PC-3 (cell line): ENCODE measurements at regions of chr4 and their contacts with region 1.

Region 1: GRCh38 chr4:73653695-73654106 is 33.5 kb upstream of the RASSF6 start:
- DNase-seq: peak; percentile 90
- ATAC-seq: peak; percentile 74
- H3K4me3 ChIP-seq: no peak overlapping the region
- H3K27ac ChIP-seq: no peak overlapping the region
- H3K4me1 ChIP-seq: no peaks in the 10 kb centered on the region
- H3K27me3 ChIP-seq: no peaks in the 10 kb centered on the region
- CTCF ChIP-seq: peak; percentile 86

Region 2: GRCh38 chr4:73308286-73308685 is 345.4 kb before region 1 on chr4:
- CTCF ChIA-PET with region 1: no interaction called
- POLR2A ChIA-PET with region 1: no interaction called
- intact Hi-C with region 1: loop called (anchors 10 kb)
- DNase-seq: peak; percentile 53
- ATAC-seq: peak; percentile 69
- H3K4me3 ChIP-seq: no peak overlapping the region
- H3K27ac ChIP-seq: no peak overlapping the region
- H3K4me1 ChIP-seq: peaks cover 11% of the 10 kb centered on the region
- H3K27me3 ChIP-seq: no peaks in the 10 kb centered on the region
- CTCF ChIP-seq: peak; percentile 60; the same call in 1 of the 2 replicates

Region 3: GRCh38 chr4:73341454-73341853 is 312.2 kb before region 1 on chr4:
- CTCF ChIA-PET with region 1: interaction called, 3 read pairs
- POLR2A ChIA-PET with region 1: no interaction called
- intact Hi-C with region 1: loop called (anchors 1 kb)
- DNase-seq: peak; percentile 77
- ATAC-seq: peak; percentile 96
- H3K4me3 ChIP-seq: no peak overlapping the region
- H3K27ac ChIP-seq: no peak overlapping the region
- H3K4me1 ChIP-seq: no peaks in the 10 kb centered on the region
- H3K27me3 ChIP-seq: no peaks in the 10 kb centered on the region
- CTCF ChIP-seq: peak; percentile 82

Region 4: DNA sequence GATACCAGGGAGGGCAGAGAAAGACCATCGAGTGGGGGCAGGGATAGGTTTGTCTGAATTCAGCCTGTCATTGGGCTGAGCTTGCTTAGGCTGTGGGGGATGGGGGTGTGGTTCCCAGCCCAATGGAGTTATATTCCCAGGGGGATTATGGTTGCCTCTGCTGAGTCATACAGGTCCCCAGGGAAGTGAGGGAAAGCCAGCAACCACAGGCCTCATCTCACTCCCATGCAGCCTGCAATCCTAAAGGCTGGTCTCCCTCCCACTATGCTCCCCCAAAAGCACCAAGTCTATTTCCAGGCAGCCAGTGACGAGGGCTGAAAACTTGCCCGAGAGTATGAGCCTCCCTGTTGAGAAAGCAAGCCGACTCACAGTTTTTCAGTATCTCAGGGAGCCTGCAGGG is 132.9 kb before region 1 on chr4:
- CTCF ChIA-PET with region 1: no interaction called
- POLR2A ChIA-PET with region 1: no interaction called
- intact Hi-C with region 1: loop called (anchors 1 kb)
- DNase-seq: peak; percentile 48
- ATAC-seq: no peak; the same call in 1 of the 2 replicates
- H3K4me3 ChIP-seq: no peak overlapping the region
- H3K27ac ChIP-seq: no peak overlapping the region; the same call in 1 of the 2 replicates
- H3K4me1 ChIP-seq: peaks cover 12% of the 10 kb centered on the region
- H3K27me3 ChIP-seq: no peaks in the 10 kb centered on the region
- CTCF ChIP-seq: no peak

Region 5: DNA sequence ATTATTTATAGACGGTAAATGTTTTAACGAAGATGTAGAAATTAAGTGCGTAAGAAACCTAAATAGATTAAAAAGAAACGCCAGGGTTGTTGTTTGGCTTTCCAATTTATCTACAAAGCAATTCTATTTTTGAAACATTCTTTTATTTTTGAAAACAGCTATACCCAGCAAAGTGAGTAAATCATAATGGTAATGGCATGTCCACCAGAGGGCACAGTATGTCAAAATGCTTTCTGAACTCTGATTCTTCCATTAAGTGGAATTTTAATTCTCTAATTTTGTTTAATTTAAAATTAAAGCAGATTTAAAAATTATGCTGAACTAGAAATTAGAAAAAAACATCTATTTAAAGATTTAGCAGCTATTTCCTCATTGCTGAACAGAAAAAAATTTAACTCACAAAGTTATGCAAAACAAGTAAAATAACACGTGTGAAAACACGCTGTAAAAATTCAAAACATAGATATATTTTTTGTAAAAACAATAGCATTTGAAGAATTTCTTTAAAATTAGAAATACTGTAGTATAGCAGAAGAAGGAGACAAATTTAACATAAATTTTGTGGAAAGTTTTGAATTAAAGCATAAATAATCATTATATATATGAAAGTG is 60.0 kb before region 1 on chr4:
- CTCF ChIA-PET with region 1: interaction called, 15 read pairs
- POLR2A ChIA-PET with region 1: no interaction called
- intact Hi-C with region 1: loop called (anchors 1 kb)
- DNase-seq: peak; percentile 76
- ATAC-seq: 0 out of 2 replicates have a peak, but pooled peaks have one; percentile 35
- H3K4me3 ChIP-seq: no peak overlapping the region
- H3K27ac ChIP-seq: no peak overlapping the region
- H3K4me1 ChIP-seq: peaks cover 15% of the 10 kb centered on the region
- H3K27me3 ChIP-seq: no peaks in the 10 kb centered on the region
- CTCF ChIP-seq: peak; percentile 92

Region 6: GRCh38 chr4:73668782-73669201 is 15.1 kb after region 1 on chr4:
- CTCF ChIA-PET with region 1: no interaction called
- POLR2A ChIA-PET with region 1: no interaction called
- intact Hi-C with region 1: no loop called
- DNase-seq: no peak
- ATAC-seq: peak; percentile 43; the same call in 1 of the 2 replicates
- H3K4me3 ChIP-seq: no peak overlapping the region
- H3K27ac ChIP-seq: peak overlapping the region; percentile 4; the same call in 1 of the 2 replicates
- H3K4me1 ChIP-seq: peaks cover 21% of the 10 kb centered on the region
- H3K27me3 ChIP-seq: no peaks in the 10 kb centered on the region
- CTCF ChIP-seq: no peak

Region 7: DNA sequence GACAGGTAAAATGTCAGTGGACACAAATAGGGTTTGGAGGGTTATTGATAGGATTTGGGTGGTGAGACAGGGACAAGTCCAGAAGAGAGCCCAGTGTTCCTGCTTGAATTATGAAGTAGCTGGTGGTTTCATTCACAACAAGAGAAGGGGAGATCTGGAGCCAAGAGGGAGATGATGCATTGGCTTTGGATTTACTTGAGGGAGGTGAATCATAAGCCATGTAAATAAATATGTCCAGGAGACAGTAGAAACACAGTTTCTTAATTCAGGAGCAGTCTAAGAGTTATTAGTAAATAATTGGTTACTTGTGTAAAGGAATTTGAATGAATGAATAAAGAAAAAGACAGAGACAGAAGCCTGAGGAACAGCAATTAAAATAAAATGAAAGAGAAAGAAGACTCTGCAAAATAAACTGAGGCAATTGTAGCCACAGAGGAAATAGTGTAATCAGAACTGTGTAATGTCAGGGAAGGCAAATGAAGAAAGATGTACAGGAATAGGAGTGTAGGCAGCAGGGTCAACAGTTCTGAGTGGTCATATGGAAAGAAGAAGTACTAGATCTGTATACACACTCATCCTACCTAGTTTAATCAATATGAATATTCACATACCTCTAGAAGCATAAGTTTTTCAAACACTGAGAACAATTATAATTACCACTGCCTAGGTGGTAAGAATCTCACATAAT is 36.5 kb after region 1 on chr4:
- CTCF ChIA-PET with region 1: no interaction called
- POLR2A ChIA-PET with region 1: no interaction called
- intact Hi-C with region 1: no loop called
- DNase-seq: peak; percentile 89
- ATAC-seq: peak; percentile 79
- H3K4me3 ChIP-seq: no peak overlapping the region
- H3K27ac ChIP-seq: peak overlapping the region; percentile 94
- H3K4me1 ChIP-seq: peaks cover 48% of the 10 kb centered on the region
- H3K27me3 ChIP-seq: no peaks in the 10 kb centered on the region
- CTCF ChIP-seq: no peak